ENCODE measurements at regions of chr12 and their contacts with region 1.

Region 1: DNA sequence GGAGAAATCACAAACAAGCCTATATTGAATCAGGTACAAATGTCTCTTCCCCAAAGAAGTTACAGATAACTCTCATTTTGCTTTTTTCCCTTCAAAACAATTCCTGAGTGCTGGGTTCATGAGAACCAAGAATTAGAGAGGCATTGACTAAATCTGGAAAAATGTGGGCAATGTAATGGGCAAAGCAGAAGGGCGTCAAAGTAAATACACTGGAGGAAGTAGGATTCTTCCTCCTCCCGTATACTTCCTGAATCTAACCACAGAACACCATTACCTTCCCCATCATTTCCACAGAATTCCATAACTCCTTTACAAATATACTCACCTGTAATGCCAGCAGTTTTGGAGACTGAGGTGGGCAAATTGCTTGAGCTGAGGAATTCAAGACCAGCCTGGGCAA is 3.0 kb upstream of the RBMS2 start:
- DNase-seq: no peak
- H3K4me3 Mint-ChIP-seq: no peak overlapping the region
- H3K27ac Mint-ChIP-seq: no peak overlapping the region
- H3K4me1 Mint-ChIP-seq: peaks cover 37% of the 10 kb centered on the region
- H3K27me3 Mint-ChIP-seq: peaks cover 1% of the 10 kb centered on the region

Region 2: DNA sequence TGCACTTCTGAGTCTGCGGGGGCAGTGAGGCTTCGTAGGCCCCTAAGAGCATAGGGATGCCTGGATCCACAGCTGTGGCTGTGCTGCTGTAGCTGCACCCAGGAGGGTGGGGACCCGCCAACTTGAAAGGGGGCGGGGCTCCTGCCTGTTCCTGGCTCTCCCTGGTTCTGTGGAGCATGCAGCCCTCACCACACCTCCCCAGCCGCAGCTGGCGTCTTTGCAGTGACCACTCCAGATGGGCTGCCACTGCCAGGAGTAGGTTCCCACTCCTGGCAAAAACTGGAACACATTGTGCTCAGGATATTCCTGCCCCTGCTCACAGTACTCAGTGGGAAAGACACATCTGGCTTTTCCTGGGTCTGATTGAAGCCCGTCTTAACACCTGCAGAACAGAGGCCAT is 105.2 kb before region 1 on chr12:
- CTCF ChIA-PET with region 1: no interaction called
- POLR2A ChIA-PET with region 1: no interaction called
- DNase-seq: no peak
- H3K4me3 Mint-ChIP-seq: no peak overlapping the region
- H3K27ac Mint-ChIP-seq: no peak overlapping the region
- H3K4me1 Mint-ChIP-seq: no peaks in the 10 kb centered on the region
- H3K27me3 Mint-ChIP-seq: no peaks in the 10 kb centered on the region

Region 3: DNA sequence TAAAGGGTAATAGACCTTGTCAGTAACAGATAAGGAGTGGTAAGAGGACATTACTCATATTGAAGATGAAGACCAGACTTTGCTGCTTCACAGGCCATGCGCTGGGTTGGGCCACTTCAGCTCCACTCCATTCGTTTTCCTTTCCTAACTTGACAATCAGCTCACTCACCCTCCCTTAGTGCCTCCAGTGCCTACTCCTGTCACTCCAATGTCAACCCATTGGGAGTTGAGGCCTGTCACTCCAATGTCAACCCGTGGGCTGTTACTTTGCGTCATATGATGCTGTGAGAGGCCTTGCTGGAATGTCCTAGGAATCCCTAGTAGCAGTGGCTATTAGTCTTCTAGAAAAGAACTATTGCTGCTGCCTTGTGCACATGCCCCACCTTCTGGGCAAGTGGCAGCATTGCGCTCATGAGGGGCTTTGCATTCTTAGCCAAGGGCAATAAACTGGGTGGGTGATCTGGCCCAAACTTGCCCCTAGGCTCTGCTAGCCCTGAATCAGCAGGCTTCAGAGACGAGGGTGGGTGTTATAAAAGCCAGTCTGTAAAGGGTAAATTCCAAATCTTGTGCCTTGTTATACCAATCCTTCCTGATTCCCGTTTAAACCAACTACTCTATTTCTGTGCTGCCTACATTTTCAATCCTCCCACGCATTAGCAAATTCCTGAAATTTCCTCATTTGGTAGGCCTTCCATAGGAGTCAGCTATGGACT is 75.5 kb after region 1 on chr12:
- CTCF ChIA-PET with region 1: interaction called, 11 read pairs
- POLR2A ChIA-PET with region 1: no interaction called
- DNase-seq: peak; percentile 70
- H3K4me3 Mint-ChIP-seq: no peak overlapping the region
- H3K27ac Mint-ChIP-seq: no peak overlapping the region
- H3K4me1 Mint-ChIP-seq: peaks cover 4% of the 10 kb centered on the region
- H3K27me3 Mint-ChIP-seq: no peaks in the 10 kb centered on the region

Measured in activated CD4-positive, alpha-beta T cell treated with anti-CD3 and anti-CD28 coated beads, Interleukin-2, amount 10 ng/mL, durations not matched to agents 7 days and 5 days (primary cell).